PC-3 (cell line): ENCODE measurements at regions of chr7 and their contacts with region 1.

Region 1: GRCh38 chr7:12570534-12571461 is at the start of gene SCIN:
- DNase-seq: peak; percentile 47
- ATAC-seq: peak; percentile 65
- H3K4me3 ChIP-seq: peak within 1 kb of the TSS; percentile 71
- H3K27ac ChIP-seq: peak within 1 kb of the TSS; percentile 44
- H3K4me1 ChIP-seq: peaks cover 37% of the 10 kb centered on the region
- H3K27me3 ChIP-seq: no peaks in the 10 kb centered on the region
- CTCF ChIP-seq: no peak
- total RNA-seq, gene SCIN: 0.91 and 1.6 TPM in 2 replicates

Region 2: DNA sequence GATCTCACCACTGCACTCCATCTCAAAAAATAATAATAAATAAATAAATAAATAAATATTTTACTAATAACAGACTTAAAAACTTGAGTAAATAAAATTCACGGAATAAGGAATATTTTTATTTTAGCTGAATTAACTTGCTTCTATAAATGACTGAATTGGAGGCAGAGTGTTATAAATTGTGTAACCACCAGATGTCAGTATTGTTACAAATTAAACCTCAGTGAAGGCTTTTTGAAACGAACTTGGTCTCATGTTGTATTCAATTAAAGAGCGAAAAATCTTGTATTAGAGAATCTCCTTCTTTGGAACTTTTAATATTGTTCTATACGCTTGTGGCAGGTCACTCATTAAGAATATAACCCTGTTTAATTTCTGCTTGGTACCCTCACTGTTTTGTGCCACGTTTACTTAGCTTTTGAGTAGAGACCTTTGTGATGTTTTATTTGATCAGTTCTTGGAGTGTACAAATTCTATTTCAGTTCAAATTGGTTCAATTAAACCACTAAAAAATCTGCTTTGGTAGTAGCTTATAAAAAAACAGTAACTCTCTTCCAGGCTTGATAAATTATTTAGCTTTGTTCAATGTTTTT is 45.9 kb before region 1 on chr7:
- CTCF ChIA-PET with region 1: no interaction called
- POLR2A ChIA-PET with region 1: no interaction called
- intact Hi-C with region 1: loop called (anchors 2 kb)
- DNase-seq: peak; percentile 80
- ATAC-seq: peak; percentile 51; the same call in 1 of the 2 replicates
- H3K4me3 ChIP-seq: no peak overlapping the region
- H3K27ac ChIP-seq: no peak overlapping the region
- H3K4me1 ChIP-seq: no peaks in the 10 kb centered on the region
- H3K27me3 ChIP-seq: no peaks in the 10 kb centered on the region
- CTCF ChIP-seq: peak; percentile 64

Region 3: GRCh38 chr7:12594056-12594455 is 23.3 kb after region 1 on chr7:
- CTCF ChIA-PET with region 1: no interaction called
- POLR2A ChIA-PET with region 1: no interaction called
- intact Hi-C with region 1: no loop called
- DNase-seq: peak; percentile 18
- ATAC-seq: no peak
- H3K4me3 ChIP-seq: no peak overlapping the region
- H3K27ac ChIP-seq: no peak overlapping the region
- H3K4me1 ChIP-seq: peaks cover 10% of the 10 kb centered on the region; the same call in 1 of the 2 replicates
- H3K27me3 ChIP-seq: no peaks in the 10 kb centered on the region
- CTCF ChIP-seq: no peak